BJ (cell line): ENCODE measurements at regions of chr6 and their contacts with region 1.

Region 1: DNA sequence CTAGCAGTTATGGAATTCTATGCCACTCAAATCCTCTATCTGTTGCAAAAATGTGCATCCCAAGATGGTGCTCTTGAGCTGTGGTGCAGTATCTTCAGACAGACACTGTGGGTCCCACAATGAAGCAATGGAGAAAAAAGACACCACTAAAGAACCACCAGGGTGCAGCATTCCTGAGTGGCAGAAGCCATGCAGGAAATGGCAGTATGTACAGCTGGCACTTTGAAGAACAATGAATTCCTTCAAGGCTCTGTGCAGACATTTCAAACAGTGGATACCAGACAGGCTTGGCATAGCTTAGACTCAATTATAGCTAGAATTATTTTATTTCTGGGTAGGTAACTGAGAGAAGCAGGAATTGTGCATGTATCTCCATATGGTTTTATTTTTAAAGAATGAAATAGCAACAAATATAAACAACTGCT is 24.0 kb upstream of the HDAC2 start:
- DNase-seq: peak; percentile 54
- H3K4me3 ChIP-seq: no peak overlapping the region
- H3K27me3 ChIP-seq: no peaks in the 10 kb centered on the region
- CTCF ChIP-seq: peak; percentile 87

Region 2: DNA sequence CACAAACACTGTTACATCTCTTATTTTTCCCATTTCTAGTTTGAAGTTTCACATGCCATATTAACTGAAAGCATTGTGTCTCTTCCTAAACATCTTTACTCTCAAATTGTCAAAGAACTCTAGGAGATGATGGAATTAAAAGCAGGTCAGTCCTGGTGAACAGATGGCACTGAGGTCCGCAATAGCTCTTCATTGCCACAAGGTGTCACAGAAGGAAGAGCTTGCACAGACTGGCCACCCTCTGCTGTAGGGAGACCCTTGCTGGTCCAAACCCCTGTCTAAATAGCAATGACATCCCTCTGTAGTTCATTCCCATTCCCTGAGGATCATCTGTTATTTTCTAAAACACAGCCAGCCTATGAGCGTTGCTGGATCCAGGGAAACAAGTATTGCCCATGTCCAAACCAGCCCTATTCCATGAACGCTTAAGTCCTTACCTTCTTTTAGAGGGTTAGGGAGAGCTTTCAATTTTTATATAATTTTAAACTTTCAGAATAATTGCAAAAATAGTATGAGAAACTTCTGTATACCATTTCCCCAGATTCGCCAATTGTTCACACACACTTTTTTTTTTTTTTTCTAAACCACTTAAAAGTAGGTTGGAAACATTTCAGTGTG is 13.9 kb before region 1 on chr6:
- CTCF ChIA-PET with region 1: interaction called, 36 read pairs
- POLR2A ChIA-PET with region 1: no interaction called
- DNase-seq: no peak
- H3K4me3 ChIP-seq: no peak overlapping the region
- H3K27me3 ChIP-seq: no peaks in the 10 kb centered on the region; the same call in 1 of the 2 replicates
- CTCF ChIP-seq: peak; percentile 58

Region 3: GRCh38 chr6:114085211-114085610 is 90.3 kb after region 1 on chr6:
- CTCF ChIA-PET with region 1: interaction called, 19 read pairs
- POLR2A ChIA-PET with region 1: no interaction called
- DNase-seq: peak; percentile 85
- H3K4me3 ChIP-seq: no peak overlapping the region
- H3K27me3 ChIP-seq: no peaks in the 10 kb centered on the region
- CTCF ChIP-seq: no peak

Region 4: DNA sequence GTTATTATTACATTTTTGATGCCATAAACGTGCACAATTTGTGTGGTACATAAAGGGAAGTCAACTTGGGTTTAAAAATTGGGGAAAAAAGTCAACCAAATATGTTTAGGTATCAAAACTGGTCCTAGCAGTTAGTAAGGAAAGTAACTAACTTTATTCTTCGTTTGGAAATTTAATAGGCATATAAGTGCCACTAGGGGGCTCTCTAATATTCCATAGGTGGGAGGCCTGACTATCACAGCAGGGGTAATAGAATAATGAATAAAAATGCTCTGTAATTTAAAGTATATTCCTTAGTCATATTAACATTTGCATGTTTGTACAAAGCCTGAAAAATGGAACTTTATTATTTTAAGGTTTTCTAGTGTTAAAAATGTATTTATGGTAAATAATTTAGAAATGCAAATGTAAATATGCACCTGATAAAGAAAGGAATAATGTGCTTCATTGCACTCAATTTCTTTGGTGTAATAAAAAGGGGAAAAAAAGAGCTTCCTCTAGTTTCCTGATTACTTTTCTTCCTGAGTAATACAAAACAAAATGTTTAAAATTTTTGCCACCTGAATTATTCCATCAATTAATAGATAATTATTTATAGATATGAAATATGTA is 101.7 kb after region 1 on chr6:
- CTCF ChIA-PET with region 1: interaction called, 23 read pairs
- POLR2A ChIA-PET with region 1: no interaction called
- DNase-seq: no peak
- H3K4me3 ChIP-seq: no peak overlapping the region
- H3K27me3 ChIP-seq: no peaks in the 10 kb centered on the region
- CTCF ChIP-seq: peak; percentile 75

Region 5: DNA sequence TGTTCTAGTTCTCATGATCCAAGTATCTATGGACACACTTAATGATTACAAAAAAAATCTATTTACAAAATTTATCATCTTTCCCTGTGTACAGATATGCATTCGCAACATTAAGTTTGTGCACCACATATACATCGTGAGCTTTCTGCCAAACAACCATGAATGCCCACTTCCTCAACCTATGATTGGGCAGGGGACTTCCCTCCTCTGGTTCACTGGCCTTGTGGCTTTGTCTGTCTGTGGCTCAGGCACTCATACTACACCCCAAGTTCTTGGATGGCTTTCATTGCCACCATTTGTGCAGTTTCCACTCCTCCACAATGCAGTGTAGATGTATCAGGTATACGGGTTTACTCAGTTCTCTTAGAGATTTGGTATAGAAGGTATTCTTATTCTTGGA is 273.0 kb after region 1 on chr6:
- CTCF ChIA-PET with region 1: no interaction called
- POLR2A ChIA-PET with region 1: no interaction called
- DNase-seq: no peak
- H3K4me3 ChIP-seq: no peak overlapping the region
- H3K27me3 ChIP-seq: no peaks in the 10 kb centered on the region
- CTCF ChIP-seq: no peak

Region 6: DNA sequence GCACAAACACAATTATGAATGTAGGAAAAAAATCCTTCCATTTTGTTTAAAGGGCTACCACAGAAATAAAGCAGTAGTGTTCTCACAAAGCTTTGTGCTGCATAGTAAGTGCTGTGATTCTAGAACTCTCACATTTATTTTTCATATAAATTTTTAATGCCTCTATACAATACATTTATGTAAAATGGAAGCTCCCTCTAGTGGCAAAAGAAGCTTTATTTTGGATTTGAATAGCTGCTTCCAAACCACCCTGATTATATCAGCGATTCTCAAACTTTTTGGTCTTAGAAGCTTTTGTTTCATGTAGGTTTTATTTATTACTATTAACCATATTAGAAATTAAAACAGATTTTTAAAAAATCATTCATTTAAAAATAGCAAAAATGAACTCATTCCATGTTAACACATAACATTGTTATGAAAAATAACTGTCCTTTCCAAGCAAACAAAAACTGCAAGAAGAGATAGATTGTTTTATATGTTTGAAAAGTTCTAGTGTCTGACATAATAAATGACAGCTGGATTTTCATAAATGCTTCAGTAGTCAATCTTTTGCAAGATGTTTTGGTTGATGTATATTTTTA is 309.5 kb after region 1 on chr6:
- CTCF ChIA-PET with region 1: interaction called, 52 read pairs
- POLR2A ChIA-PET with region 1: interaction called, 3 read pairs
- DNase-seq: no peak
- H3K4me3 ChIP-seq: no peak overlapping the region
- H3K27me3 ChIP-seq: no peaks in the 10 kb centered on the region
- CTCF ChIP-seq: peak; percentile 54

Region 7: GRCh38 chr6:114419175-114419574 is 424.2 kb after region 1 on chr6:
- CTCF ChIA-PET with region 1: no interaction called
- POLR2A ChIA-PET with region 1: no interaction called
- DNase-seq: no peak
- H3K4me3 ChIP-seq: no peak overlapping the region
- H3K27me3 ChIP-seq: no peaks in the 10 kb centered on the region
- CTCF ChIP-seq: no peak